ENCODE measurements at regions of chr16 and their contacts with region 1.

Region 1: GRCh38 chr16:70470927-70471341 is 16.5 kb downstream of the FCSK start:
- DNase-seq: peak; percentile 65 to 66
- ATAC-seq: peak; percentile 81 to 88
- H3K4me3 ChIP-seq: no peak overlapping the region
- H3K27ac ChIP-seq: peak overlapping the region in 1 of 2 experiments; percentile 30; a peak in 2 of 6 replicates
- H3K4me1 ChIP-seq: peaks cover 5% of the 10 kb centered on the region; the same call in 1 of the 3 replicates
- CTCF ChIP-seq: peak; percentile 55
- EP300 ChIP-seq: no peak
- POLR2A ChIP-seq: no peak
- RAD21 ChIP-seq: peak; percentile 74 to 77

Region 2: GRCh38 chr16:70372921-70373728 is 97.8 kb before region 1 on chr16:
- CTCF ChIA-PET with region 1: interaction called, 52 read pairs
- POLR2A ChIA-PET with region 1: interaction called, 4 read pairs
- DNase-seq: no peak
- ATAC-seq: no peak
- H3K4me3 ChIP-seq: no peak overlapping the region
- H3K27ac ChIP-seq: no peak overlapping the region
- H3K4me1 ChIP-seq: no peaks in the 10 kb centered on the region
- CTCF ChIP-seq: no peak
- EP300 ChIP-seq: no peak
- POLR2A ChIP-seq: no peak
- RAD21 ChIP-seq: no peak

Region 3: GRCh38 chr16:70395345-70395901 is 75.5 kb before region 1 on chr16:
- CTCF ChIA-PET with region 1: interaction called, 110 read pairs
- POLR2A ChIA-PET with region 1: no interaction called
- DNase-seq: peak; percentile 65 to 75
- ATAC-seq: peak; percentile 78 to 93
- H3K4me3 ChIP-seq: no peak overlapping the region
- H3K27ac ChIP-seq: 0 out of 6 replicates have a peak overlapping the region, but pooled peaks have one; percentile 3 to 27
- H3K4me1 ChIP-seq: peaks cover 17% of the 10 kb centered on the region
- CTCF ChIP-seq: peak; percentile 75
- EP300 ChIP-seq: no peak
- POLR2A ChIP-seq: no peak
- RAD21 ChIP-seq: peak; percentile 85 to 88

Region 4: DNA sequence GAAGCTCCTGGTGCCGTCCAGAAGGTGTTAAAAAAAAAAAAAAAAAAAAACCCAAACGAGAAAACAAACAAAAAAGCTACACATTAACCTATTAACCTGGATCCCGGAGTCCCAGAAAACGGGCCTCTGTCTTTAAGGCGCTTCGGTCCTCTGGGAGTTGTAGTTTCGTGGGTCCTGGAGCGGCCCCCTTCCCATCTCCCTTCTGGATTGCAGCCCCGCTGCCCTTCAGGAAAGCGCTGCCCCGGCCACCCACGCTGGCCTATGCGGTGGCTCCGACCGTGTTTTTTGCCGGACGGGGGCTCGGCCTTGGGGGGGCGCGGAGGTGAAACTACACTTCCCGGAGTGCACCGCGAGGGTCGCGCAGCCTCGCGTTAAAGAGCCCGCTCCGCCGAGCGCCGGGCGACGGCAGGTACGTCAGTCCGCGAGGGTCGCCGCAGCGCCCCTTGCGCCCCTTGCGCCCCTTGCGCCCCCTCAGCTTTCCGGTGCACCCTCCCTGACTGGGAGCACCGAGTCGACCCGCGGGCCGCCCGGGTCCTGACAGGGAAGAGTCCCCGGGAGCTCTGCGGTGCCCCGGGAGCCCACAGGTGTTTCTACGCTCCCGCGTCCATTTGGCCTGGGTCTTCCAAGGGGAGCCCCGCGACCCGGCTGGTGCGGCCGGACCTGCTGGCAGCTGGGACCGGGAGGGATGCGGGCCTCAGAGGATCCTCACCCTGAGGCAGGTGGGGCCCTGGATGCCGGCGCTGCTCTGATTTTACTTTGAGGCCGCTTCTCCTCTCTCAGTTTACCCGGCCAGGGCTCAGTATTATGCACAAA is 16.5 kb before region 1 on chr16 and contains the start of gene FCSK:
- CTCF ChIA-PET with region 1: interaction called, 17 read pairs
- POLR2A ChIA-PET with region 1: interaction called, 3 read pairs
- DNase-seq: peak; percentile 75 to 94
- ATAC-seq: peak; percentile 94 to 96
- H3K4me3 ChIP-seq: peak within 1 kb of the TSS; percentile 80
- H3K27ac ChIP-seq: peak within 1 kb of the TSS; percentile 96 to 97
- H3K4me1 ChIP-seq: peaks cover 12% of the 10 kb centered on the region; the same call in 2 of the 3 replicates
- CTCF ChIP-seq: peak; percentile 13; the same call in 1 of the 3 replicates
- EP300 ChIP-seq: no peak
- POLR2A ChIP-seq: peak; percentile 48
- RAD21 ChIP-seq: 0 out of 5 replicates have a peak, but pooled peaks of 1 of the 2 experiments have one; percentile 29
- polyA plus RNA-seq, gene FCSK: 5.7 and 9.3 TPM in 2 replicates

Region 5: GRCh38 chr16:70460737-70461261 is 10.1 kb before region 1 on chr16:
- CTCF ChIA-PET with region 1: interaction called, 17 read pairs
- POLR2A ChIA-PET with region 1: no interaction called
- DNase-seq: no peak
- ATAC-seq: peak; percentile 30 to 54; a peak in 4 of 6 replicates
- H3K4me3 ChIP-seq: no peak overlapping the region
- H3K27ac ChIP-seq: 0 out of 6 replicates have a peak overlapping the region, but pooled peaks of 1 of the 2 experiments have one; percentile 10
- H3K4me1 ChIP-seq: peaks cover under 1% of the 10 kb centered on the region; the same call in 1 of the 3 replicates
- CTCF ChIP-seq: no peak
- EP300 ChIP-seq: no peak
- POLR2A ChIP-seq: no peak
- RAD21 ChIP-seq: no peak

Region 6: DNA sequence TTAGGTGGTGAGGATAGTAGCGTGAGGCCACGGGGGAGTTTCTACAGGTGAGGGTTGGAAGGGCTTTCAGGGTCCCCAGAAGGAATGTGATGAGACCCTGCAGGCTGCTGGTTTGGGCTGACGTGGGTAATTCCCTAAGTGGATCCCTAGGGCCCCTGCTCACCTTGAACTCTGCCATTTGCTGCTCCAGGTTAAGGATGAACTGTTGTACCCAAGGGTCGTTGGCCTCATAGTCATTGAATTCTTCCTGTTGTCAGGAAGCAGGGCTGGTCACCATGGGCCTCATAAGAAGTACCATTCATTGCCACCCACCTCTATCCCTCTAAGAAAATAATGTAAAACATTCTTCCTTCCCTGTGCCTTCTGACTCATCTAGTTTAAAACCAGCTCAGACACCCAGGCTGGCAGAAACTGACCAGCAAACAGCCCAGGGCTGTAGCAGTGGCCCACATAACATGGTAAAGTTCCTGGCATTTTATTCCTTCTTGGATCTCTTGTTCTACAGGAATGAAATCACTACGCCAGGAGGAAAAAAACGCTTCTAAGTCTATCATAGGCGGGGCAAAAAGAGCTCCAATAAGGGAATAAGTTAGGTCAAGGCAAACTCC is 11.1 kb after region 1 on chr16:
- CTCF ChIA-PET with region 1: interaction called, 11 read pairs
- POLR2A ChIA-PET with region 1: no interaction called
- DNase-seq: no peak
- ATAC-seq: peak; percentile 7; a peak in 2 of 6 replicates
- H3K4me3 ChIP-seq: no peak overlapping the region
- H3K27ac ChIP-seq: peak overlapping the region in 1 of 2 experiments; percentile 63; a peak in 2 of 6 replicates
- H3K4me1 ChIP-seq: peaks cover 8% of the 10 kb centered on the region; the same call in 2 of the 3 replicates
- CTCF ChIP-seq: no peak
- EP300 ChIP-seq: no peak
- POLR2A ChIP-seq: no peak
- RAD21 ChIP-seq: no peak